Activated B cell treated with CpG ODN at 0.5 μM for 24 hours (primary cell): ENCODE measurements at regions of chr2 and their contacts with region 1.

Region 1: DNA sequence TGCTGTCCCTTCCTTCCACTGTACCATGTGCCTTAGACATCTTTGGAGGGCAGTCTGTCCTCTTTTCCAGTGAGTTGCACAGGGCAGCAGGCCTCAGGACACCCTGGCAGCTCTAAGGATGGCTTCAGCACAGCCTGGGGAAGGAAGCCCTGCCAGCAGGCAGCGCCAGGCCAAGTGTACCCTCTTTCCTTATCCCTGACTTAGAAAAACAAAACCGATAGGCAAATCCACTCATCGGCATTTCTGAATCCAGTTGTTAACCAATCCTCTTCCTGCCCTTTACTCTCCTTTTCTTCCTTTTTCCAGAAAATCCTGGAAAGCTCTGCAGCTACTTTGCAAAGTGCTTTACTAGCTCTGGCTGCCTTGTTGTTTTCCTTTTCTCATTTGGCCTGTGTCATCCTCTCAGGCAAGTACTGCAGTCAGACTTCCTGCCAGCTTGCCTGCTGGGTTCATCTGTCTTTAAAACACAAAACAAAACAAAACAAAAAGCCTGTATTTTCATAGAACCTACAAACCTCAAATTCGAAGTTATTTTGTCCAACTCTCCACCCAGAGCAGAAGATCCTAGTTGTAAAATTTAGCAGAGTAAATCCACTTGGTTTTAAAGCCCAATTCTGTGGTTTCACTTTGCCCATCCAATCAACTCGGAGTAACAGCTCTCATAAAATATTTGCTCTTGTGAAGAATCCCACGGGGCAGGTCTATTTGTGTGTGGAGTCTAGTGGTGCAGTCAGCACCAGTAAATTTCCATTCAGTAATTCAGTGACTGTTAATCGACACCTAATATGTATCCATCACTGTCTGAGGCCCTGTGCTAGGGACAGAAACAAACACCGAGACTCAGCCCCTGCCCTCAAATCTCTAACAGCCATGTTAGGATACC is 45.2 kb downstream of the PCBP1 start:
- DNase-seq: no peak
- ATAC-seq: peak; percentile 72
- H3K4me3 Mint-ChIP-seq: peak overlapping the region; percentile 92
- H3K27ac Mint-ChIP-seq: peak overlapping the region; percentile 99
- H3K4me1 Mint-ChIP-seq: peaks cover 72% of the 10 kb centered on the region
- H3K27me3 Mint-ChIP-seq: no peaks in the 10 kb centered on the region
- CTCF ChIP-seq: no peak

Region 2: DNA sequence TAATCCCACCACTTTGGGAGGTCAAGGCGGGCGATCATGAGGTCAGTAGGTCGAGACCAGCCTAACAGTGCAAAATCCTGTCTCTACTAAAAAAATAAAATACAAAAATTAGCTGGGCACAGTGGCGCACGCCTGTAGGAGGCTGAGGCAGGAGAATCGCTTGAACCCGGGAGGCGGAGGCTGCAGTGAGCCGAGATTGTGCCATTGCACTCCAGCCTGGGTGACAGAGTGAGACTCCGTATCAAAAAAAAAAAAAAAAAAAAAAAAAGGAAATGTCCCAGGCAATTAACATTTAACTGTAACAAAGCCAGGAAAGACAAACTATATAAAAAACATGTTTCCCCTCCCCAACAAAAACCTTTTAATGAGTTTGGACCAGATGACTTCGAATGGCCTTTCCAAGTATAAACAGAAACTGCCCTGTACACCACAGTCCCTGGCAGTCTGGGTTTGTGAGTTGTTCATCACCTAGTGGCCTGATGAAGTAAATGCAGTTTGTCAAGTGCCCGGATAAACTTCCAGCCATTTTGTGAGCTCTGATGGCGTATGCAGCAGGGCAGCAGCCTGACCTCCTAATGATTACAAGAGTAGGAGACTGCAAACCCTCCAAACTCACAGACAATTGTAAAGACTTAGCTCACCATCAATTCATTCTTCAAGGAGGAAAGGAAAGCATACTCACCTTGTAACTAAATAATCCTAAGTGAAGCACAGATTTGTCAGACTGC is 61.8 kb before region 1 on chr2:
- CTCF ChIA-PET with region 1: interaction called, 11 read pairs
- POLR2A ChIA-PET with region 1: interaction called, 976 read pairs
- intact Hi-C with region 1: no loop called
- DNase-seq: no peak
- ATAC-seq: peak; percentile 92
- H3K4me3 Mint-ChIP-seq: peak overlapping the region; percentile 64
- H3K27ac Mint-ChIP-seq: peak overlapping the region; percentile 83
- H3K4me1 Mint-ChIP-seq: peaks cover 32% of the 10 kb centered on the region
- H3K27me3 Mint-ChIP-seq: no peaks in the 10 kb centered on the region
- CTCF ChIP-seq: peak; percentile 33

Region 3: GRCh38 chr2:70086838-70087701 is 45.4 kb before region 1 on chr2 and contains the start of gene PCBP1:
- CTCF ChIA-PET with region 1: interaction called, 9 read pairs
- POLR2A ChIA-PET with region 1: interaction called, 976 read pairs
- intact Hi-C with region 1: loop called (anchors 2 kb)
- DNase-seq: peak; percentile 96
- ATAC-seq: peak; percentile 54
- H3K4me3 Mint-ChIP-seq: peak within 1 kb of the TSS; percentile 96
- H3K27ac Mint-ChIP-seq: peak within 1 kb of the TSS; percentile 100
- H3K4me1 Mint-ChIP-seq: peaks cover 70% of the 10 kb centered on the region
- H3K27me3 Mint-ChIP-seq: no peaks in the 10 kb centered on the region
- CTCF ChIP-seq: no peak
- total RNA-seq, gene PCBP1: 370 and 379 TPM in 2 replicates

Region 4: DNA sequence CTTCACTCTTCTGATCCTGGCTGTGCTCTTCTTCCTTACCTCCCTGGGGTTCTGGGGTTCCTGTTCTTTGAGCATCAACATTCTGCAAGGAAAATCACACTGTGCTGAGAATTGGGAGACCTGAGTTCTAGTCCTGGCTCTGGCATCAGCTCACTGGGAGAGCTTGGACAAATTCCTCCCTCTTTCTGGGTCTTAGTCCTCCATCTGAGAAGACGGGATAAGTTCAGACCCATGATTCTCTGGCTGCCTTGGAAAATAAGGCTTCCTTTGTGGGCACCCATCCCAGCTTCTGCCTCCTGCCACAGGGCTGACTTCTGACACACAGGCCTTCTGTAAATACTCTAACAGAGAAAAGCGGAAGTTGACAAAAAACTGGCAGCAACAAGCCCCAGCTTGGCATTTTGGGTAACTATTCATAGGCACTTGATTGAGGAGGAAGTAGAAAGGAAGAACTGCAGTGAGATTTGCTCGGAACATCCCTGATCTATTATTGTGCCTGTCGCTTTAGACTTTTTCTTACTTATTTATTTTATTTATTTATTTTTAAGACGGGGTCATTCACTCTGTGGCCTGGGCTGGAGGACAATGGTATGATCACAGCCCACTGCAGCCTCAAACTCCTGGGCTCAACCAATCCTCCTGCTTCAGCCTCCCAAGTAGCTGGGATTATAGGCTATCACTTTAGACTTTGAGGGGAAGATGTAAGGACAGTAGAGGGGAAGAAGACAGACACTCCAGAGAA is 37.3 kb before region 1 on chr2:
- CTCF ChIA-PET with region 1: interaction called, 4 read pairs
- POLR2A ChIA-PET with region 1: interaction called, 976 read pairs
- intact Hi-C with region 1: loop called (anchors 1 kb)
- DNase-seq: peak; percentile 36
- ATAC-seq: peak; percentile 95
- H3K4me3 Mint-ChIP-seq: peak overlapping the region; percentile 84
- H3K27ac Mint-ChIP-seq: peak overlapping the region; percentile 97
- H3K4me1 Mint-ChIP-seq: peaks cover 54% of the 10 kb centered on the region
- H3K27me3 Mint-ChIP-seq: no peaks in the 10 kb centered on the region
- CTCF ChIP-seq: no peak

Region 5: GRCh38 chr2:70104231-70105111 is 28.0 kb before region 1 on chr2:
- CTCF ChIA-PET with region 1: interaction called, 4 read pairs
- POLR2A ChIA-PET with region 1: interaction called, 128 read pairs
- intact Hi-C with region 1: no loop called
- DNase-seq: no peak
- ATAC-seq: no peak
- H3K4me3 Mint-ChIP-seq: peak overlapping the region; percentile 80
- H3K27ac Mint-ChIP-seq: peak overlapping the region; percentile 94
- H3K4me1 Mint-ChIP-seq: peaks cover 55% of the 10 kb centered on the region
- H3K27me3 Mint-ChIP-seq: no peaks in the 10 kb centered on the region
- CTCF ChIP-seq: no peak

Region 6: GRCh38 chr2:70115646-70116442 is 16.6 kb before region 1 on chr2:
- CTCF ChIA-PET with region 1: interaction called, 6 read pairs
- POLR2A ChIA-PET with region 1: interaction called, 358 read pairs
- intact Hi-C with region 1: no loop called
- DNase-seq: no peak
- ATAC-seq: peak; percentile 54
- H3K4me3 Mint-ChIP-seq: peak overlapping the region; percentile 46
- H3K27ac Mint-ChIP-seq: peak overlapping the region; percentile 73
- H3K4me1 Mint-ChIP-seq: peaks cover 49% of the 10 kb centered on the region
- H3K27me3 Mint-ChIP-seq: no peaks in the 10 kb centered on the region
- CTCF ChIP-seq: no peak